ENCODE measurements at regions of chr17 and their contacts with region 1.

Region 1: DNA sequence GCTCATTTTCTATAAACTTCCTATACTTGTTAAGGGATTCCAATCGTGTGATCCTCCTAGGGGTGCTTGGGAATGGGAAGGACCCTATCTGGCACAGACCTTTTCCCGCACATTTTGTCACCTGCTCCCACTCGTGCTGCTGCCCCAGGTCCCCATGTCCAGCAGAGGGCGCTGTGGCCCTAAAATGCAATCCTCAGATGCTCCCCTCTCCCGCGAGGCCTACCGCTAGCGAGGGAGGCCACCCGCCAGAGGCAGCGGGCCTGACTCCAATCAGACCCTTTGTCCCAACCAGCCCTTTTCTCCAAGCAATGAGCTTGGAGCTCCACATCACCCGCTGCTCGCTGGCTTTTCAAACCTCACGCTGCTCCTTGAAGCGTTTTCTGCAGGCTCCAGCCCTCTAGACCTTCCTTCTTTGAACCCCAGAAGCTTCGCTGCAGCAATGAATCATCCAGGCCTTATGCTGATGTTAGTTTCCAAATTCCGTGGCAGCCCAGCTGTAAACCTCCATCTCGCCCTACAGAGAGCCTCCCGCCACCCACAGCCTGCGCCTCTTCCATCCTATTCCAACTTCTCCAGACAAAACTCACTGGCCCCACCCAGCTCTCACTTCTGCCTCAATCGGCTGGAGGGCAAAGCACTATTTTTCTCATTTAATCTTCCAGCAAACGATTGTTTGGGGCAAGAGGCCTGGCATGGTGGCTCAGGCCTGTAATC is 23.6 kb upstream of the FZD2 start:
- DNase-seq: peak; percentile 85
- H3K4me3 ChIP-seq: no peak overlapping the region
- H3K27ac ChIP-seq: no peak overlapping the region
- H3K4me1 ChIP-seq: peaks cover 10% of the 10 kb centered on the region
- H3K27me3 ChIP-seq: no peaks in the 10 kb centered on the region
- CTCF ChIP-seq: peak; percentile 76

Region 2: GRCh38 chr17:44464037-44464436 is 69.7 kb before region 1 on chr17:
- CTCF ChIA-PET with region 1: no interaction called
- POLR2A ChIA-PET with region 1: no interaction called
- intact Hi-C with region 1: no loop called
- DNase-seq: no peak
- H3K4me3 ChIP-seq: no peak overlapping the region
- H3K27ac ChIP-seq: no peak overlapping the region
- H3K4me1 ChIP-seq: no peaks in the 10 kb centered on the region
- H3K27me3 ChIP-seq: no peaks in the 10 kb centered on the region
- CTCF ChIP-seq: no peak

Region 3: GRCh38 chr17:44636562-44636961 is 102.9 kb after region 1 on chr17:
- CTCF ChIA-PET with region 1: no interaction called
- POLR2A ChIA-PET with region 1: no interaction called
- intact Hi-C with region 1: loop called (anchors 5 kb)
- DNase-seq: peak; percentile 1
- H3K4me3 ChIP-seq: no peak overlapping the region
- H3K27ac ChIP-seq: no peak overlapping the region
- H3K4me1 ChIP-seq: no peaks in the 10 kb centered on the region
- H3K27me3 ChIP-seq: no peaks in the 10 kb centered on the region
- CTCF ChIP-seq: peak; percentile 30; the same call in 1 of the 2 replicates

Region 4: DNA sequence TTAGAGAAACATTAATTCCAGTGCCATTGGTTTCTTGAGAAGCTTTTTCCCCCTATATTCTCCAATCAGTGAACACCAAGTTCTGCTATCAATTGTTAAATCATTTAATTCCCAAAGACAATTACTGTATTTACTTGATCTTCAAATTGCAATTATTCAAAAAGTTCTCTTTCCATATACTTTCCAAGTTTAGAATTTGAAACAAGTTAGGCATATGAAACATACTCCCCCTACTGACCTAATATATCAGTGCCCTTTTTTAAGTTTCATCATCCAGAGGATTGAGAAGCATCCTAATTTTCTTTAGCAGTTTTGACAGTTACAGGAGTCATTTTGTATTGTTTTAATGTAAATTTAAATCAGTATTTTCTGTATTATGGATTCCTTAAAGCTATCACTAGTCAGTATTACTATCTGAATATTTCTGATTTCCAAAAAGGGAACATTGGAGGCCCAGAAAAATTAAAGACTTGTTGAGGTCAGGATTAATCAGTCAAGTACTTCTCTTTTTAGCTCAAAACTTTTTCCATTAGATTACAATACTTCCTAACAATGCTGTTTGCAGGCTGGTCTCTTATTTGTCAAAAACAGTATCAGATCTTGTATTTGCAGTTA is 138.9 kb after region 1 on chr17:
- CTCF ChIA-PET with region 1: interaction called, 9 read pairs
- POLR2A ChIA-PET with region 1: no interaction called
- intact Hi-C with region 1: loop called (anchors 10 kb)
- DNase-seq: peak; percentile 9
- H3K4me3 ChIP-seq: no peak overlapping the region
- H3K27ac ChIP-seq: no peak overlapping the region
- H3K4me1 ChIP-seq: no peaks in the 10 kb centered on the region
- H3K27me3 ChIP-seq: no peaks in the 10 kb centered on the region
- CTCF ChIP-seq: peak; percentile 56

Region 5: DNA sequence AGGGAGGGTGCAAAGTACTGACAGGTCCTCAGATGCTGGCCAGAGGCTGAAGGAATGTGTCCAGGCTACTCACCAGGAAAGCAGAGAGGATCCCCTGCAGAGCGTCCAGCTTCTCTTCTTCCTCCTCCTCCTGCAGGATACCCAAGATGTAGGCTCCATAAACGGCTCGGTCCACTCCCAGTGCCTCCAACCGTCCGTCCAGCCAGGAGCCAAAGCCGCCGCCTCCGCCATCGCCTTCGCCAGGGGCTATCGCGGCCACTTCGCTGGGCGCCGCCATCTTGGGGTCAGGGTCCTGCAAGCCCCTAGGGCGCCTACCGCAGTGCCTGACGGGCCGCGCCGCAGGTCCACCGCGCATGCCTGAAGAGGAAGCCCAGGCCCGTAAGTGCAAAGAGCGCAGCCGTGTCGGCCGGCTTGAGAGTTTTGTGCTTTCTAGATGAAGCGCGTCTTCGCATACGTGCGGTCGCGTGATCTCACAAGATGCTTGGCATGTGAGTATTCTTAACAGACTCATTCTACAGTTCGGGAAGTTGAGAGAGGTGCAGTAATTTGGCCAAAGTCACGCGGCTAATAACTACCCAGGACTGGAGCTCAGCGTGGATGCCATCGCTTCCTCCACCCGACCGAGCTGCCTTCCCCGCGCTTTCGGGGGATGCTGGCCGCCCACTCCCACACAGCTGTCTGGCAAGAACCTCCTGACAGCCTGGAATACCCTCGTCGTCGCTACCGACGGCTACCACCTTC is 156.0 kb after region 1 on chr17 and contains the start of gene CCDC43:
- CTCF ChIA-PET with region 1: no interaction called
- POLR2A ChIA-PET with region 1: no interaction called
- intact Hi-C with region 1: no loop called
- DNase-seq: peak; percentile 90
- H3K4me3 ChIP-seq: peak within 1 kb of the TSS; percentile 89
- H3K27ac ChIP-seq: peak within 1 kb of the TSS; percentile 77
- H3K4me1 ChIP-seq: no peaks in the 10 kb centered on the region
- H3K27me3 ChIP-seq: no peaks in the 10 kb centered on the region
- CTCF ChIP-seq: no peak
- total RNA-seq, gene CCDC43: 20.3 and 21.1 TPM in 2 replicates

Region 6: GRCh38 chr17:44775136-44775837 is 241.6 kb after region 1 on chr17:
- CTCF ChIA-PET with region 1: no interaction called
- POLR2A ChIA-PET with region 1: no interaction called
- intact Hi-C with region 1: no loop called
- DNase-seq: peak; percentile 97
- H3K4me3 ChIP-seq: peak overlapping the region; percentile 34
- H3K27ac ChIP-seq: no peak overlapping the region
- H3K4me1 ChIP-seq: no peaks in the 10 kb centered on the region
- H3K27me3 ChIP-seq: no peaks in the 10 kb centered on the region
- CTCF ChIP-seq: no peak

Measured in A673 (cell line).